Activated CD8-positive, alpha-beta T cell treated with anti-CD3 and anti-CD28 coated beads for 36 hours (primary cell): ENCODE measurements at regions of chr16 and their contacts with region 1.

Region 1: GRCh38 chr16:31458844-31459721 is at the start of gene ARMC5:
- DNase-seq: peak; percentile 98
- ATAC-seq: peak; percentile 77
- H3K4me3 Mint-ChIP-seq: peak within 1 kb of the TSS; percentile 91
- H3K27ac Mint-ChIP-seq: peak within 1 kb of the TSS; percentile 97
- H3K4me1 Mint-ChIP-seq: peaks cover 39% of the 10 kb centered on the region
- H3K27me3 Mint-ChIP-seq: no peaks in the 10 kb centered on the region
- CTCF ChIP-seq: peak; percentile 73
- total RNA-seq, gene ARMC5: 8.2 to 10.0 TPM

Region 2: DNA sequence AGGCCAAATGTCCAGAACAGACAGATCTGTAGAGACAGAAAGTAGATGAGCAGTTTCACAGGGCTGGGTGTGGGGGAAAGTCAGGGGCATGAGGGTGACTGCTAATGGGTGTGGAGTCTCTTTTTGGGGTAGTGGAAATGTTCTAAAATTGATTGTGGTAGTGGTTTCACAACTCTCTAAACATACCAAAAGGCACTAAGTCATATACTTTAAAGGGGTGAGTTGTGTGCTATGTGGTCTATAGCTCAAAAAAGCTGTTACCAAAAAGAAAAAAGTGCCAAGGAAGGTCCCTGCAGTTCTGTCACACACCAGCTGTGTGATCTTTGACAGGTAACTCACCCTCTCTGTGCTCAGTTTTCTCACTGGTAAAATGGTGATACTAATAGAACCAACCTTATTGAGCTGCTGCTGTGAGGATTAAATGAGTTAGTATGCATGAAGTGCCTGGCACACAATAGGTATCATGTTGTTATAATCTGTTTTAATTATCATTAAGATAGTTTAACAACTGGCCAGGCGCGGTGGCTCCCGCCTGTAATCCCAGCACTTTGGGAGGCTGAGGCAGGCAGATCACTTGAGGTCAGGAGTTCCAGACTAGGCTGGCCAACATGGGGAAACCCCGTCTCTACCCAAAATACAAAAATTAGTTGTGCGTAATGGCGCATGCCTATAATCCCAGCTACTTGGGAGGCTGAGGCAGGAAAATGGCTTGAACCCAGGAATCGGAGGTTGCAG is 93.8 kb before region 1 on chr16:
- CTCF ChIA-PET with region 1: no interaction called
- POLR2A ChIA-PET with region 1: no interaction called
- intact Hi-C with region 1: no loop called
- DNase-seq: peak; percentile 43
- ATAC-seq: peak; percentile 82
- H3K4me3 Mint-ChIP-seq: no peak overlapping the region
- H3K27ac Mint-ChIP-seq: peak overlapping the region; percentile 49
- H3K4me1 Mint-ChIP-seq: peaks cover 14% of the 10 kb centered on the region
- H3K27me3 Mint-ChIP-seq: no peaks in the 10 kb centered on the region
- CTCF ChIP-seq: no peak

Region 3: GRCh38 chr16:31427441-31428278 is 31.4 kb before region 1 on chr16:
- CTCF ChIA-PET with region 1: interaction called, 17 read pairs
- POLR2A ChIA-PET with region 1: no interaction called
- intact Hi-C with region 1: no loop called
- DNase-seq: peak; percentile 71
- ATAC-seq: peak; percentile 67
- H3K4me3 Mint-ChIP-seq: no peak overlapping the region
- H3K27ac Mint-ChIP-seq: no peak overlapping the region
- H3K4me1 Mint-ChIP-seq: peaks cover 19% of the 10 kb centered on the region
- H3K27me3 Mint-ChIP-seq: peaks cover 10% of the 10 kb centered on the region
- CTCF ChIP-seq: no peak

Region 4: DNA sequence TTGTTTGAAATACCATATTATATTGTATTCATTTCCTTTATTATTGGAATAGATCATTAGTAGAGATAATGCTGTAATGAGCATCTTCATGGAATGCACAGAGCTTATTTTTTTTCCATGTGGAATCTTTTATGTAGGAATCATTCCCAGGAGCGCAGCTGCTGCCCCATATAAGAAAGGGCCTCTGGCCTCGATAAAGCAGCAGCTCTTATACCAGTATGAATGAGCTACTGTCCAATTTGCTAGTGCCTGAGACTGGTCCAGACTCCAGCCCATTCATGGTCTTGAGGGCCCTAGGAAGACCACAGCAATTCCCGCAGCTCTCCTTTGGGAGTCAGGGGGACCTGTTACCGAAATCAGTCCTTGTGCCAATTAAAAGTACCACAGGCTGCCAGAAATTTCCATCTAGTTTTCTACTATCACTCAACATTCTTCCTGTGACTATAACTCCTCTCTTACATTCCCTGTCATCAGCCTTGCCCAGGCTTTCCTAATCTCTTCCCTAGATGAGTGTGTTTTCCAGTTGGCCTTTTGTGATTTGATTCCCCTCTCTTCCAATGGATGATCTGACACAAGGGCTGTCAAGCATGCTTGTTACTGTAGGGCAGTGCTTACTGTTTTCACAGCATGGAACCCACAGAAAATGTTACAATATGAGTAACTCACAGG is 18.4 kb before region 1 on chr16:
- CTCF ChIA-PET with region 1: interaction called, 20 read pairs
- POLR2A ChIA-PET with region 1: interaction called, 12 read pairs
- intact Hi-C with region 1: no loop called
- DNase-seq: no peak
- ATAC-seq: no peak
- H3K4me3 Mint-ChIP-seq: no peak overlapping the region
- H3K27ac Mint-ChIP-seq: no peak overlapping the region
- H3K4me1 Mint-ChIP-seq: peaks cover 19% of the 10 kb centered on the region
- H3K27me3 Mint-ChIP-seq: peaks cover 6% of the 10 kb centered on the region
- CTCF ChIP-seq: no peak

Region 5: DNA sequence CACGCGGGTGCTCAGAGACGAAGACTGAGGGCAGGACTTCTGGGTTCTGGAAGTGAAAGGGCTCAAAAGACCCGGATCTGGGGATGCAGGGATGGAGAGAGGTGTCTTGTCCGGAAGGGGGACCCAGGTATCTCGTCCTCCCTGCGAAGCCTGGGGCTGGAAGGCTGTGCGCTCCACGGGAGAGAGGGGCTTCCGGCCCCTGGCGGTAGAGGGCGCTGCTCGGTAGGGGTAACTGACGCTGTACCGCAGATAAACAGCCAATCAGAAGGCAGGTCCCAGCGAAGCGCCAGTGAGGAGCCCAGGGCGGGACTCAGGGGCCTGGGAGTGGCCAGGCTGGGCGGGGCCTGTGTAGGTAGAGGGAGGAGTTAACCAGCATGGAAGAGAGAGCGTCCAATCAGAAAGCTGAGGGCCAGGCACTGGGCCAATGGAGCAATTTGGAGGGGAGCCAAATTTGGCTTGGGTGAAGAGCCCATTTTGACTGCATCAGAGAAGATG is 13.7 kb after region 1 on chr16:
- CTCF ChIA-PET with region 1: interaction called, 70 read pairs
- POLR2A ChIA-PET with region 1: interaction called, 8 read pairs
- intact Hi-C with region 1: no loop called
- DNase-seq: peak; percentile 67
- ATAC-seq: peak; percentile 61
- H3K4me3 Mint-ChIP-seq: peak overlapping the region; percentile 60
- H3K27ac Mint-ChIP-seq: no peak overlapping the region
- H3K4me1 Mint-ChIP-seq: peaks cover 16% of the 10 kb centered on the region
- H3K27me3 Mint-ChIP-seq: peaks cover 19% of the 10 kb centered on the region
- CTCF ChIP-seq: peak; percentile 61

Region 6: DNA sequence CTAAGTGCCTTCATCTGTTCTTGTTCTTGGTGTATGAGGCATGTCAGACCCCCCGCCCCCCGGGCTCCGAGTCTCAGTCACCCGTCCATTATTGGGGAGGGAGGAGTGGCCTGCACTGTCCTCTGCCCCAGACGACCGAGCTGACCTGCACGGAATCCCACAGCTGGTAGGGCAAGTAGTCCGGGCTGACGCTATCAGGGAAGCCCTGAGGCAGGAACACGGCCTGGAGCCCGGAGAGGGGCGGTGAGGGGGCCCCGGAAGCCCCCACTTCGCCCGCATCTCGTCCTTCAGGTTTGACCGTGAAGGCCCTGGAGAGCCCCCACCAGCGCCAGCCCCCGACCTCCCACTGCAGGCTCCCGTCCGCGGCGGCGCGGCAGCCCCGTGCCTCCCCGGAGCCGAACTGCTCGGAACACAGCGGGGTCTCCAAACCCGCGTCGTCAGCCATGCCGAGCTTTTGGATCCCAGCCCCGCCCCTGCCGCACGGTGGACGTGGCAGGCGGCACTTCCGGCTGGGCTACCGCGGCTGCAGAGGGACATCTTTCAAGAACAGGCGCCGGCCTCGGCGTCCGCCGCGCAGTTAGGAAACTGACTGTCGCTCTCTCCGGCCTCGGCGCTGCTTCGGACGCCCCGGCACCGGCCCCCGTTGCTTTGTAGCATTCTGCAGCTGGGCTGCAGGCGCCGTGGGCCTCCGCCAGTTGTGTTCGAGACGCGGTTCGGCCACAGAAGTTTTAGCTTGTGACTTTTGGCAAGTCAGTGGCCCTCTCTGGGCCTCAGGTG is 49.0 kb after region 1 on chr16 and contains the start of gene RUSF1:
- CTCF ChIA-PET with region 1: interaction called, 12 read pairs
- POLR2A ChIA-PET with region 1: interaction called, 17 read pairs
- intact Hi-C with region 1: no loop called
- DNase-seq: peak; percentile 93
- ATAC-seq: peak; percentile 87
- H3K4me3 Mint-ChIP-seq: peak within 1 kb of the TSS; percentile 98
- H3K27ac Mint-ChIP-seq: peak within 1 kb of the TSS; percentile 98
- H3K4me1 Mint-ChIP-seq: peaks cover 45% of the 10 kb centered on the region
- H3K27me3 Mint-ChIP-seq: no peaks in the 10 kb centered on the region
- CTCF ChIP-seq: no peak
- total RNA-seq, gene RUSF1: 35.8 to 36.7 TPM

Region 7: DNA sequence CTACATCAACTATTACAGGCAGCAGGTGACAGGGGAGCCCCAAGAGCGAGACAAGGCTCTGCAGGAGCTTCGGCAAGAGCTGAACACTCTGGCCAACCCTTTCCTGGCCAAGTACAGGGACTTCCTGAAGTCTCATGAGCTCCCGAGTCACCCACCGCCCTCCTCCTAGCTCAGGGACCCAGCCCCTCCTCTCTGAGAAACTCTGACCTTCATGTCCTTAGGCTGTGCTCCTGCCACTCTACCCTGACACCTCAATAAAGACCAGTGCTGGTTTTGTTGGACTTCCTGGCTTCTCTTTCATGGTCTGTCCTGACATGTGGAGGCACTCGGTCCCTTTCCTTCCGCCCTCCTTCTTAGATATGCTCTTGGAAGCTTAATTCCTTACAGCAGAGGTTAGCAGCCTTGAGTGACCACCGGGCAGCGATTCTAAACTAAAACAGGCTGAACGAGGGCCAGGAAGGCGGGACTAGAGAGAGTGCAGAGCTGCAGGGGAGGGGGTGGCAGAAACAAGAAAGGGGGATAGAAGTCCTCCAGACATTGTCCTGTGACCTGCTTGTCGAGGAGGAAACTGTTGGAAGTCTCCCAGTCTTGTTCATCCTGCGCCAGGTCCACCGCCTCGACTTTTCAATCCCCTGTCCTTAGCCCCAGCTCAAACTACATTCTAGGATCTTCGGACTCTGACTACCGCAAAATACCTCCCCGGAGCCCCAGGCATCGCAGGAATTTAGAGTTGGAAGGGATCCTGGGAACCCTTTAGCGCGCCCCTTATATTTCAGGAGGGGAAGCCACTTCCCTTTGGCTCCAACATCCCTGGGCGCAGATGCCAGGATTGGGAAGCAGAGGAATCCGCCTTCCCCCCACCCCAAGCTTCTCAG is 69.7 kb after region 1 on chr16:
- CTCF ChIA-PET with region 1: no interaction called
- POLR2A ChIA-PET with region 1: no interaction called
- intact Hi-C with region 1: no loop called
- DNase-seq: no peak
- ATAC-seq: no peak
- H3K4me3 Mint-ChIP-seq: peak overlapping the region; percentile 9
- H3K27ac Mint-ChIP-seq: no peak overlapping the region
- H3K4me1 Mint-ChIP-seq: peaks cover 16% of the 10 kb centered on the region
- H3K27me3 Mint-ChIP-seq: peaks cover 22% of the 10 kb centered on the region
- CTCF ChIP-seq: no peak

Region 8: DNA sequence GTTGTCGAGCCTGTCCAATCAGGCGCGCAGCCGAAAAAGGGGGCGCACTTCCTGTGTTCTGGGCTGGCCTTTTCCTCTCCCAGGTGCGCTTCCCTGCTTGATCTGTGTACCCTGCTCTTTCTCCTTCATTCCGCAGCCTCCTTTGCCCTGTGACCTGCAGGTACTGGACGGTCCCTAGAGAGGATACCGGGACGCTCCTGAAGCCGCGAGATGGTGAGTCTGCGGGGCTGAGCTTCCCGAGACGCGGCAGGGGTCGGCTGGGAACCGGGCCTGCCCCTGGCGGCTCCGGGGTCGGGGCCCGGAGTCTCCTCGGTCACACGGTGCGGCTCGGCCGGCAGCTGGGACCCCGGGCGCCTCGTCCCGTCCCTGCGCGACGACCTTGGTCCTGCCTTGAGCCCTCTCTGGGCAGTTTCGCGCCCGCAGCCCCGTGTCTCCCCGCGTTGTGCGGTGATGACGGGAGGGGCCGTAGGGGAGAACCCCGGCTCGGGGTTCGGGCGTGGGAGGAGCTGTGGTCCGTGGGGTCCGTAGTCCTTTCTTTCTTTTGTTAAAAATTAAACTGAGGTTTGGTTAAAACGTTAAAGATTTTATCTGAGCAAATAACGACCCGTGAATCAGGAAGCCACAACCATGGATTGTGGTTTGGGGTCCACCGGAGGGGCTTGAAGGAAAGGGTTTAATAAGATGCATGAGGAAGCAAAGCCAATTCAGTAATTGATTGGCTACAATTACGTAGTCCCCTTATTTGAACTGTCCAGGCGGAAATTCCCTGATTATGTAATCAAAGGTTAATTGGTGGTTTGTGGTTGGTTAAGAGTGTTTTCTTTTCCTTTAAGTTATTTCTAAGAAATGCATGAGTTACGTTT is 241.7 kb after region 1 on chr16:
- CTCF ChIA-PET with region 1: interaction called, 16 read pairs
- POLR2A ChIA-PET with region 1: interaction called, 13 read pairs
- intact Hi-C with region 1: no loop called
- DNase-seq: peak; percentile 97
- ATAC-seq: peak; percentile 90
- H3K4me3 Mint-ChIP-seq: peak overlapping the region; percentile 91
- H3K27ac Mint-ChIP-seq: peak overlapping the region; percentile 97
- H3K4me1 Mint-ChIP-seq: peaks cover 25% of the 10 kb centered on the region
- H3K27me3 Mint-ChIP-seq: no peaks in the 10 kb centered on the region
- CTCF ChIP-seq: no peak

Region 9: GRCh38 chr16:31868691-31869167 is 409.6 kb after region 1 on chr16:
- CTCF ChIA-PET with region 1: interaction called, 25 read pairs
- POLR2A ChIA-PET with region 1: interaction called, 7 read pairs
- intact Hi-C with region 1: loop called (anchors 10 kb)
- DNase-seq: peak; percentile 91
- ATAC-seq: peak; percentile 48
- H3K4me3 Mint-ChIP-seq: peak overlapping the region; percentile 66
- H3K27ac Mint-ChIP-seq: peak overlapping the region; percentile 97
- H3K4me1 Mint-ChIP-seq: peaks cover 51% of the 10 kb centered on the region
- H3K27me3 Mint-ChIP-seq: no peaks in the 10 kb centered on the region
- CTCF ChIP-seq: peak; percentile 94